ENCODE measurements at regions of chr17 and their contacts with region 1.

Region 1: DNA sequence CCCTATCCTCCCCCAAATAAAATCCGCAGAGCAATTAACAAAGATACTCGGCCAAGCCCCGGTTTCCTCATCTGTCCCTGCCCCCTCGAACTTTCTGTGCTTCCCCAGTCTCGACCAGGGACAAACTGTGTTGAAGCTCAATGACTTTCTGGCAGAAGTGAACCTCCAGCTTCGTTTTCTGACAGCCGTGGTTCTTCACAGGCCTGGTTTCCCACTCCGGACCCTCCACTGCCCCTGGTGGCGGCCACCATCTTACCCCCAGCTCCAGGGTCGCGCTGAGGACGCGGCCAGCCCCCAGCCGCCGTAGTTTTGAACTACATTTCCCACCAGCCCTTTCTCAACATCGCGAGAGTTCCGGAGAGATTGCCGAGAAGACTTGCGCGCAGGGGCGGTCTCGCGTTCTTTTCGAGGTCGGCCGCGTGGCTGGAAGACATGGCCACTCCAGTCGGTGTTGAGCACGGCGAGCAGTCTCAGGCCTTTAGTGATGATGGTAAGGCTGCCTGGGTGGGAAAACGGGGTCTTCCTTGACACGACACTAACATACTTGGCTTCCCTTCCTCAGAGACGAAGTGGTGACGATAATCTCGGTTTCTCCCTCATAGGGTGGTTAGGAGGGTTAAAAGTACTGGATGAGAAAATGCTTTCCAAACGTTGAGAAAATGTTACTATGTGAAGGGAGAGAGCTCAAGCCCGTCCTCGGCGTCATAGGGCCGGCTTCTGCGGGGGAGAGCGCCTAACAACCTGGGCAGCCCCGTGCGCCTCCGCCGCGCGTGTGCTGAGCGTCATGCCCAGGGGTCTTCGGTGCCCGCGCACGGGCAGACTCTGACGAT is 17.7 kb downstream of the PRCD start:
- H3K4me3 ChIP-seq: peak overlapping the region; percentile 93
- H3K27ac ChIP-seq: peak overlapping the region; percentile 82
- H3K4me1 ChIP-seq: peaks cover 20% of the 10 kb centered on the region
- CTCF ChIP-seq: peak; percentile 97

Region 2: GRCh38 chr17:76388966-76389888 is 168.4 kb before region 1 on chr17:
- CTCF ChIA-PET with region 1: no interaction called
- POLR2A ChIA-PET with region 1: no interaction called
- H3K4me3 ChIP-seq: no peak overlapping the region
- H3K27ac ChIP-seq: no peak overlapping the region
- H3K4me1 ChIP-seq: peaks cover 4% of the 10 kb centered on the region; the same call in 1 of the 2 replicates
- CTCF ChIP-seq: peak; percentile 60

Region 3: GRCh38 chr17:76523084-76524037 is 34.2 kb before region 1 on chr17:
- CTCF ChIA-PET with region 1: interaction called, 76 read pairs
- POLR2A ChIA-PET with region 1: interaction called, 7 read pairs
- H3K4me3 ChIP-seq: no peak overlapping the region
- H3K27ac ChIP-seq: no peak overlapping the region
- H3K4me1 ChIP-seq: peaks cover 8% of the 10 kb centered on the region
- CTCF ChIP-seq: peak; percentile 98

Region 4: DNA sequence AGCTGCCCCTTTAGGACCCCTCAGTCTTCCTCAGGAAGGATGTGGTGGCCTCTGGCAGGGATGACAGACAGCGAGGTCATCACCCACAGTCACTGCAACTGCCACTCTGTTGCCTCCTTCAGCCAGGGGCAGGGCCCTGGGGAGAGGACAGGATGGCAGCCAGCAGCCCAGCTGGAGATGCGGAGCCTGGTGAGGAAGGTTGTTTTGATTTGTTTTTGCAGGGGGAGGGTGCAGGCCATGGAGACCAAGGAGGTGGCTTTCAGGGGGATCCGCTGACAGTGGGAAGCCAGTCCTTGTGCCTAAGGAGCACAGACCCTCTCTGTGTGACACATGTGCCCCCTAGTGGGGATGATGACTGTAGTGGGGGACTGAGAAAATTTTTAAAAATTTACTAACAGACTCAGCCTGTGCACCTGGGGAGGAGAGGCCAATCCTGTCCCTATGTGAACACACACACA is 10.4 kb before region 1 on chr17:
- CTCF ChIA-PET with region 1: interaction called, 36 read pairs
- POLR2A ChIA-PET with region 1: interaction called, 15 read pairs
- H3K4me3 ChIP-seq: no peak overlapping the region
- H3K27ac ChIP-seq: no peak overlapping the region
- H3K4me1 ChIP-seq: peaks cover 21% of the 10 kb centered on the region
- CTCF ChIP-seq: peak; percentile 86

Region 5: DNA sequence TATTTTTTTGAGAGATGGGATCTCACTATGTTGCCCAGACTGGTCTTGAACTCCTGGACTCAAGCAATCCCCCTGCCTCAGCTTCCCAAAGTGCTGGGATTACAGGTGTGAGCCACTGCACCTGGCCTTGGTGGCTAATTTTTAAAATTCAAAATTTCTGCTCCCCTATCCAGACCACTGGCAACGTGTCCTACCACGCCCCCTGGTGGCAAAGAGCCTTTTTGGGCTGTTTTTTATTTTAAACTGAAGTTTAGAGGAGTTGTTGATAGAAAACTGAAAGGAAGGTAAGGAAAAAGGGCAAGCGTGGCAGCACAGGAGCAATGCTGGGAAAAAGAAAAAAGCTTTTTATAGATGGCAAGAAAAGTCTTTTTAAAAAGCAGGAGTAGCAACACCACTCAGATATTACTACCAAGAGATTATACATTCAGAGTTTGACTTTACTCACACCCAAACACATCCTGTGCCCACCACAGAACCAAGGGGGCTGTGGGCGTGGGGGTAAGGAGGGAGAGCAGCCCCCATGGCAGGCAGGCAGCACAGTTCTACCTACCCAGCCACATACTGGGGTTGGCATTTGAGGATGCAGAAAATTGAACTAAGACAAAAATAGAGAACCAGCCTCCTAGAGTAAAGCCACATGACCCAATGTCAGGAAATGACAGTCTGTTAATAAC is 157.4 kb after region 1 on chr17:
- CTCF ChIA-PET with region 1: interaction called, 26 read pairs
- POLR2A ChIA-PET with region 1: interaction called, 4 read pairs
- H3K4me3 ChIP-seq: no peak overlapping the region
- H3K27ac ChIP-seq: no peak overlapping the region
- H3K4me1 ChIP-seq: peaks cover 35% of the 10 kb centered on the region
- CTCF ChIP-seq: peak; percentile 66; the same call in 1 of the 2 replicates

Measured in HEK293 (cell line).